HEK293T (cell line): ENCODE measurements at regions of chr17 and their contacts with region 1.

Region 1: DNA sequence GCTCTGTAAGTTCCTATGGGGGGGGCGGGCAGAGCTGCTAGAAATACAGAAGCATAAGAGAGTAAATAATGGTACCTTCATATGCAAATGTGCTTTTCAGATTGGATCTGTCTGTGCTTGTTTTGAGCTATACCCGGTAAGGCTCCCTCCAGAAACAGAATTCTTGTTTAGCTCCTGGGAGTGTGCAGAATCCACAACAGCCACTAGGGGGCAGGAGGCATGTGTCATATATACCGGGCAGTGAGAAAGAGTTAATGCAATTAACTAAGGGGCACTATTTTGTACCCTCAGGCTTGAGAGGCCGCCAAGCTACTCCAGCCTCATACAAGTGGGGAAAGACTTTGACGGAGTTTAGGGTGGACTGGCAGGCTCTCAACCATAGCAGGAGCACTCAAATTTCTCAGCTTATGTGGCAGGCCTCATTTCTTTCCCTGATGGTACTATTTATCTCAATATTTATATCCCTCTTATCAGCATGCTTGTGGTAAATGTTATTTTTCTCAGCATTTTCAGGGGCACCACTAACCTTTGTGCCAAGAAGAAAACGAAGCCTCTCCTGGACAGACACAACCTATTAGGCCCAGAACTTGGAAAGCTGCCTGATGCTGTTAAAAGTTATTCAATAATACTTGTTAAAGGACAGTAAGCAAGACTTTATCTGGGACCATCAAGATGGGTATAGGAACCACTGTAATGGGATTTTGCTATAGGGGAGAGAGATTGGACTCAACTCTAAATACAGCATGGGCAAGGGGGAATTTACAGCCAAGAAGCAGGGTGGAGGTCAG is 10.7 kb upstream of the CENPV start:
- DNase-seq: peak; percentile 74

Region 2: GRCh38 chr17:16353317-16354174 is 10.4 kb before region 1 on chr17 and contains the start of gene CENPV:
- CTCF ChIA-PET with region 1: interaction called, 33 read pairs
- POLR2A ChIA-PET with region 1: interaction called, 26 read pairs
- DNase-seq: peak; percentile 81

Region 3: GRCh38 chr17:16415031-16415924 is 51.3 kb after region 1 on chr17 and contains the start of gene TRPV2:
- CTCF ChIA-PET with region 1: interaction called, 13 read pairs
- POLR2A ChIA-PET with region 1: no interaction called
- DNase-seq: peak; percentile 54

Region 4: GRCh38 chr17:16449121-16449570 is 85.2 kb after region 1 on chr17:
- CTCF ChIA-PET with region 1: interaction called, 11 read pairs
- POLR2A ChIA-PET with region 1: interaction called, 5 read pairs
- DNase-seq: no peak